CD14-positive monocyte (primary cell): ENCODE measurements at regions of chr15 and their contacts with region 1.

Region 1: GRCh38 chr15:60585743-60586708 is 107.1 kb upstream of the ICE2 start:
- DNase-seq: peak; percentile 42 to 60 (median 55)
- H3K4me3 ChIP-seq: no peak overlapping the region
- H3K4me3 Mint-ChIP-seq: peak overlapping the region in 1 of 2 donors; percentile 75
- H3K27ac ChIP-seq: no peak overlapping the region
- H3K27ac Mint-ChIP-seq: no peak overlapping the region
- H3K4me1 ChIP-seq: peaks cover 3 to 4% of the 10 kb centered on the region in 2 donors
- H3K4me1 Mint-ChIP-seq: peaks cover 4% of the 10 kb centered on the region
- H3K27me3 ChIP-seq: peaks cover 49% of the 10 kb centered on the region in 2 donors
- H3K27me3 Mint-ChIP-seq: peaks cover 26 to 44% (median 41%) of the 10 kb centered on the region in 3 donors
- CTCF ChIP-seq: peak; percentile 91

Region 2: DNA sequence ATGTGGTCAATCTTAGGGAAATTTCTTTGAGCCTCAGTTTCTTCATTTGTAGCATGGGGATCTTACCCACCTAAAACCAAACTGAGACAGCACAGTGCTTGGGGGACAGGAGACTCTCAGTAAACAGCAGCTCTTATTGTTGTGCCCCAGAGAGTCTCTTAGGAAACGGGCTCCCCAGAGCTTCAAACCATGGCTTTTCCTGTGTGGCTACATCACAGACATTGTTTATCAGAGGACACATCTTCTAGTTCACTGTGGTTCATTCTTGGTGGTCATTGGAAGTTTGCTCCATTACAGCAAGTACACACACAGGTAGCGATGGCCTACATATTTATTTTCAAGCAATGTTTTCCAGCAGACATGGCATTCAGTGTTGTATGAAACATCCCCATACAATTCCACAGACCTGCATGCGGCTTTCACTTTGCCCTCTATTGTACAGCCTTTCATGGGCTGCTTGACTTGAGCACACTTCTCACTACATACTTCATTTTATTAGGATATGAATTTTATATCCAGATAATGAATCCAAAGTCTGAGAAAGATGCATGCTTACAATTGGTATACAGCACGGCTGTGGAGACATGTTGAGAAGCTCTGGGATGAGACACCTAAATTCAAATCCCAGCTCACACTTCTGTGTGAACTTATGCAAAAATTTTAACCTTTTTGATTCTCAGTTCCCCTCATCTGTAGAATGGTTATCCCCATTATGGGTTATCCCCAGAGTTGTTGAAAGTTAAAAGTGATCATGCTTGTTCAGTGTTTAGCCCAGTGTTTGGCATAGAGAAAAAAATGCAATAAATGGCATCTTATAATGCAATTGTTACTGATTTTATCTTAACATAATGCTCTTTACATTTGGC is 22.3 kb before region 1 on chr15:
- intact Hi-C with region 1: no loop called
- DNase-seq: no peak
- H3K4me3 ChIP-seq: no peak overlapping the region
- H3K4me3 Mint-ChIP-seq: no peak overlapping the region
- H3K27ac ChIP-seq: no peak overlapping the region
- H3K27ac Mint-ChIP-seq: no peak overlapping the region
- H3K4me1 ChIP-seq: no peaks in the 10 kb centered on the region
- H3K4me1 Mint-ChIP-seq: no peaks in the 10 kb centered on the region
- H3K27me3 ChIP-seq: no peaks in the 10 kb centered on the region
- H3K27me3 Mint-ChIP-seq: peaks cover 0 to 5% (median 0%) of the 10 kb centered on the region in 3 donors
- CTCF ChIP-seq: no peak

Region 3: GRCh38 chr15:60916679-60917460 is 330.8 kb after region 1 on chr15:
- intact Hi-C with region 1: loop called (anchors 5 to 10 kb)
- DNase-seq: peak; percentile 61 to 79 (median 62)
- H3K4me3 ChIP-seq: peak overlapping the region in 1 of 3 experiments; percentile 32
- H3K4me3 Mint-ChIP-seq: peak overlapping the region in 1 of 2 donors; percentile 53
- H3K27ac ChIP-seq: peak overlapping the region in 1 of 2 donors; percentile 70
- H3K27ac Mint-ChIP-seq: peak overlapping the region in 6 of 7 donors; percentile 52 to 81 (median 70)
- H3K4me1 ChIP-seq: peaks cover 22 to 23% of the 10 kb centered on the region in 2 donors
- H3K4me1 Mint-ChIP-seq: peaks cover 18% of the 10 kb centered on the region
- H3K27me3 ChIP-seq: no peaks in the 10 kb centered on the region
- H3K27me3 Mint-ChIP-seq: peaks cover 3 to 5% (median 4%) of the 10 kb centered on the region in 3 donors
- CTCF ChIP-seq: peak; percentile 78

Region 4: GRCh38 chr15:61834076-61834697 is 1248.2 kb after region 1 on chr15:
- intact Hi-C with region 1: loop called (anchors 2 to 5 kb)
- DNase-seq: peak; percentile 34 to 53 (median 50)
- H3K4me3 ChIP-seq: no peak overlapping the region
- H3K4me3 Mint-ChIP-seq: peak overlapping the region in 1 of 2 donors; percentile 70
- H3K27ac ChIP-seq: no peak overlapping the region
- H3K27ac Mint-ChIP-seq: no peak overlapping the region
- H3K4me1 ChIP-seq: peaks cover 10 to 12% of the 10 kb centered on the region in 2 donors
- H3K4me1 Mint-ChIP-seq: peaks cover 23% of the 10 kb centered on the region
- H3K27me3 ChIP-seq: peaks cover 0 to 9% of the 10 kb centered on the region in 2 donors
- H3K27me3 Mint-ChIP-seq: peaks cover 3 to 18% (median 10%) of the 10 kb centered on the region in 3 donors
- CTCF ChIP-seq: peak; percentile 96